CD4-positive, alpha-beta T cell (primary cell): ENCODE measurements at regions of chr10 and their contacts with region 1.

Region 1: GRCh38 chr10:103592186-103593021 is 98.9 kb downstream of the NEURL1 start:
- DNase-seq: peak in 10 of 14 experiments; percentile 10 to 58 (median 26)
- ATAC-seq: peak; percentile 80
- H3K4me3 ChIP-seq: no peak overlapping the region
- H3K4me3 Mint-ChIP-seq: no peak overlapping the region
- H3K27ac ChIP-seq: no peak overlapping the region
- H3K27ac Mint-ChIP-seq: no peak overlapping the region
- H3K4me1 ChIP-seq: no peaks in the 10 kb centered on the region
- H3K4me1 Mint-ChIP-seq: peaks cover 4% of the 10 kb centered on the region
- H3K27me3 ChIP-seq: no peaks in the 10 kb centered on the region
- H3K27me3 Mint-ChIP-seq: no peaks in the 10 kb centered on the region
- CTCF ChIP-seq: peak; percentile 49

Region 2: GRCh38 chr10:103416436-103417147 is 175.8 kb before region 1 on chr10:
- CTCF ChIA-PET with region 1: no interaction called
- POLR2A ChIA-PET with region 1: no interaction called
- intact Hi-C with region 1: loop called in 1 of 2 experiments (anchors 5 kb)
- DNase-seq: peak; percentile 35 to 81 (median 56)
- ATAC-seq: peak; percentile 54
- H3K4me3 ChIP-seq: no peak overlapping the region
- H3K4me3 Mint-ChIP-seq: no peak overlapping the region
- H3K27ac ChIP-seq: no peak overlapping the region
- H3K27ac Mint-ChIP-seq: no peak overlapping the region
- H3K4me1 ChIP-seq: no peaks in the 10 kb centered on the region
- H3K4me1 Mint-ChIP-seq: no peaks in the 10 kb centered on the region
- H3K27me3 ChIP-seq: no peaks in the 10 kb centered on the region
- H3K27me3 Mint-ChIP-seq: no peaks in the 10 kb centered on the region
- CTCF ChIP-seq: peak; percentile 90

Region 3: GRCh38 chr10:103678178-103678526 is 85.7 kb after region 1 on chr10:
- CTCF ChIA-PET with region 1: no interaction called
- POLR2A ChIA-PET with region 1: no interaction called
- intact Hi-C with region 1: no loop called
- DNase-seq: peak; percentile 70 to 98 (median 83)
- ATAC-seq: peak; percentile 97
- H3K4me3 ChIP-seq: peak overlapping the region; percentile 62
- H3K4me3 Mint-ChIP-seq: peak overlapping the region; percentile 79
- H3K27ac ChIP-seq: peak overlapping the region; percentile 69 to 89
- H3K27ac Mint-ChIP-seq: peak overlapping the region; percentile 95
- H3K4me1 ChIP-seq: peaks cover 29% of the 10 kb centered on the region
- H3K4me1 Mint-ChIP-seq: peaks cover 16% of the 10 kb centered on the region
- H3K27me3 ChIP-seq: no peaks in the 10 kb centered on the region
- H3K27me3 Mint-ChIP-seq: no peaks in the 10 kb centered on the region
- CTCF ChIP-seq: no peak

Region 4: GRCh38 chr10:104246976-104247375 is 654.6 kb after region 1 on chr10:
- CTCF ChIA-PET with region 1: no interaction called
- POLR2A ChIA-PET with region 1: no interaction called
- intact Hi-C with region 1: no loop called
- DNase-seq: peak in 2 of 14 experiments; percentile 61 to 71
- ATAC-seq: no peak
- H3K4me3 ChIP-seq: no peak overlapping the region
- H3K4me3 Mint-ChIP-seq: no peak overlapping the region
- H3K27ac ChIP-seq: no peak overlapping the region
- H3K27ac Mint-ChIP-seq: no peak overlapping the region
- H3K4me1 ChIP-seq: no peaks in the 10 kb centered on the region
- H3K4me1 Mint-ChIP-seq: no peaks in the 10 kb centered on the region
- H3K27me3 ChIP-seq: no peaks in the 10 kb centered on the region
- H3K27me3 Mint-ChIP-seq: peaks cover 12% of the 10 kb centered on the region
- CTCF ChIP-seq: no peak